PC-9 (cell line): ENCODE measurements at regions of chr7 and their contacts with region 1.

Region 1: GRCh38 chr7:29921404-29922010 is 68.1 kb downstream of the SCRN1 start:
- DNase-seq: peak; percentile 56 to 61
- H3K4me3 ChIP-seq: no peak overlapping the region
- H3K27ac ChIP-seq: no peak overlapping the region
- H3K4me1 ChIP-seq: no peaks in the 10 kb centered on the region
- H3K27me3 ChIP-seq: no peaks in the 10 kb centered on the region
- CTCF ChIP-seq: peak; percentile 99

Region 2: DNA sequence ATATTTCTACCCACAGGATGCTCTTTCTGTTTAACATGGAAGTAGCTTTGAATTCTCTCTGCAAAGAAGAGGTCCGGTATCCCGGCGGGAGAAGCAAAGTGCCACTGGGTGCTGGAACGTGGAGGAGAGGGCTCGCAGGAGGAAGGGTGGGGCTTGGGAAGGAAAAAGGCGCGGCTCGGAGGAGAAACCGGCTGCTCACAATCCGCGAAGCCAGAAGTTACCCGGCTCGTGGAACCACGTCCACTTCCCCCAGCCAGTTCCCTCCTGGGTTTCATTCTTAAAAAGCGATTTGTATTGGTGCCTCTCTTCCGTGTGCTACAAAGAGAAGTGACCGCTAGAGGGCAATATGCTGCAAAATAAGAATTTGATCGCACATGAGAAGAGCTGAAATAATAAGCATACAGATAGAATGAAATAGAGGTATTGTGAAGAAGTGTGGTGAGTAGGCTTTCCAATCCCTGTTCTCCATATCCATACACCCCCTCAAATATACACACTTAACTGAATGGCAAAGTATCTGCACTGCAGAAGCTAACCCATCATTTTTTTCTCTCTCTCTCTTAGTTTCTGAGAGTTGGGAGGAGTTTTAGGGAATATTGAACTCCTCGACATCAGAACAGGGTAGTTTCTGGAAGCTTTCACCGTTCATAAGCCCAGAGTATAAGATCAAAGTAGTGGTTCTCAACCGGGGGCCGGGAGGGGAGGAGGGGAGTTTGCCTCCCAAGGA is 994.5 kb before region 1 on chr7:
- CTCF ChIA-PET with region 1: no interaction called
- POLR2A ChIA-PET with region 1: no interaction called
- intact Hi-C with region 1: loop called (anchors 10 kb)
- DNase-seq: peak; percentile 45 to 82
- H3K4me3 ChIP-seq: peak overlapping the region; percentile 54
- H3K27ac ChIP-seq: no peak overlapping the region
- H3K4me1 ChIP-seq: peaks cover 13% of the 10 kb centered on the region; the same call in 1 of the 2 replicates
- H3K27me3 ChIP-seq: no peaks in the 10 kb centered on the region
- CTCF ChIP-seq: peak; percentile 97

Region 3: DNA sequence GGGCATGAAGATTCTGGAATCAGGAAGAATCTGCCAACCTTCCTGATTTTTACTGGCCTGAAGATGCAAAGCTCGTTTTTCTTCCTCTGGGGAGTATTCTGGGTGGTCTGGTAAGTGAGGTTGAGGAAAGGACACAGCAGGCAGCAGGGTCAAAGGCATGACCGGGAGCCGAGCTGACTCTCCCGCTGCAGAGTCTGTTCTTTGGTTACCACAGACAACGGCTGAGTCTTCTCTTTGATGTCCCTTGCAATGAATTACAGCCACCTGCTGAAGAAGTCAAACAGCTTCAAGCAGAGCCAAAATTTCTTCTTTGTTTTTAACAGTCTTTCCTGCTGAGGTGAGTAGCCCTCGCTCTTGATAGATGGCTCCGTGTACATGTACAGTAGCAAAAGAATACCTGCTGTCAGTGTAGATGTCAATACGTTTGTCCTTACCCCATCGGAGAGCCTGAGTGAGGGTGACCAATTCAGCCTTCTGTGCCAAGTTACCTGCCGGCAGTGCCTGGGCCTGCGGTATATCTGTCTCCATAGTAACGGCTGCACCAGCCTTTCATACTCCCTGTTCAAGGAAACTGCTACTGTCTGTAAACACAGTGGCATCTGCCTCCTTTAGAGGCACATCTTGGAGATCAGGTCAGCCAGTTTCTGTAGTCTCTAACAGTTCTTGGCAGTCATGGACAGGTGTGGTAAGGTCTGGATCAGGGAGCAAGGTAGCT is 281.5 kb before region 1 on chr7:
- CTCF ChIA-PET with region 1: no interaction called
- POLR2A ChIA-PET with region 1: no interaction called
- intact Hi-C with region 1: loop called (anchors 1 kb)
- DNase-seq: no peak
- H3K4me3 ChIP-seq: no peak overlapping the region
- H3K27ac ChIP-seq: no peak overlapping the region
- H3K4me1 ChIP-seq: peaks cover 14% of the 10 kb centered on the region
- H3K27me3 ChIP-seq: no peaks in the 10 kb centered on the region
- CTCF ChIP-seq: no peak

Region 4: DNA sequence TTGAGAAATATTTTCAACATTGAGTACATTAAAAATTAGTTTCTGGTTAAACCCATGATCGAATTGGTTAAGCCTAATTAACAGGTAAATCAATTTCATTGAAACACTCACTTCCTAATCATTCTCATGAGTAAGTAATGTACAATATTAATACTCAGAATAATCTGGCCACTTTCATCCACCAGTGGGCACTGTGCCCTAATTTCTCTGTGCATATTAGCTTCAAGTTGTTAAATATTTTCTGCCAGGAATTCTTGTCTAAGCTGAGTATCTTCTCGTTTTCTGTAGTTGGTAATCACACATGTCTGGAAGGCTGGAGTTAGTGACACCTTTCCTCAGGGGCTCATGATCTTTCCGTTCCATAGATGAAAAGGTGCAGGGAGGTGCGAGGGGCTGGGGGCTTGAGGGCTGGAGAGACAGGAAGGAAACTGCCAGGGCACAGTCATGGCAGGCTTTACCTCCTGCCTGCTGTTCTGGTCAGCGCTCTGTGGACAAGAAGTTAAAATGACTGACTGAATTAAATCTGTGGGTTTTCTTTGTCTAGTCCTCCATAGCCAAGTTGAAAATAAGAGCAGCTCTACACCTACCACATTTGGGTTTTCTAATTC is 43.3 kb before region 1 on chr7:
- CTCF ChIA-PET with region 1: interaction called, 8 read pairs
- POLR2A ChIA-PET with region 1: no interaction called
- intact Hi-C with region 1: loop called (anchors 1 kb)
- DNase-seq: peak; percentile 50 to 59
- H3K4me3 ChIP-seq: no peak overlapping the region
- H3K27ac ChIP-seq: no peak overlapping the region
- H3K4me1 ChIP-seq: no peaks in the 10 kb centered on the region
- H3K27me3 ChIP-seq: no peaks in the 10 kb centered on the region
- CTCF ChIP-seq: peak; percentile 90

Region 5: GRCh38 chr7:29906200-29907022 is 15.1 kb before region 1 on chr7:
- CTCF ChIA-PET with region 1: no interaction called
- POLR2A ChIA-PET with region 1: no interaction called
- intact Hi-C with region 1: no loop called
- DNase-seq: no peak
- H3K4me3 ChIP-seq: no peak overlapping the region
- H3K27ac ChIP-seq: no peak overlapping the region
- H3K4me1 ChIP-seq: no peaks in the 10 kb centered on the region
- H3K27me3 ChIP-seq: no peaks in the 10 kb centered on the region
- CTCF ChIP-seq: no peak

Region 6: GRCh38 chr7:30001998-30002397 is 80.5 kb after region 1 on chr7:
- CTCF ChIA-PET with region 1: no interaction called
- POLR2A ChIA-PET with region 1: no interaction called
- intact Hi-C with region 1: no loop called
- DNase-seq: no peak
- H3K4me3 ChIP-seq: no peak overlapping the region
- H3K27ac ChIP-seq: no peak overlapping the region
- H3K4me1 ChIP-seq: no peaks in the 10 kb centered on the region
- H3K27me3 ChIP-seq: no peaks in the 10 kb centered on the region
- CTCF ChIP-seq: no peak